Dorsolateral prefrontal cortex (tissue), 120 donors: ENCODE measurements at regions of chr16 and their contacts with region 1.

Region 1: GRCh38 chr16:67872786-67873537 is at the start of gene EDC4:
- DNase-seq: peak; percentile 59 to 88 (median 76)
- H3K4me3 ChIP-seq: peak within 1 kb of the TSS; percentile 67 to 100 (median 93)
- H3K27ac ChIP-seq: peak within 1 kb of the TSS in 58 of 59 donors; percentile 11 to 93 (median 81)
- H3K27me3 ChIP-seq: no peaks in the 10 kb centered on the region
- CTCF ChIP-seq: peak in 33 of 56 donors; percentile 9 to 56 (median 26)
- total RNA-seq, gene EDC4: 46.0 to 96.6 (median 69.2) TPM

Region 2: GRCh38 chr16:67659648-67660563 is 213.1 kb before region 1 on chr16 and contains the start of gene ACD:
- intact Hi-C with region 1: no loop called
- DNase-seq: peak; percentile 80 to 96 (median 92)
- H3K4me3 ChIP-seq: peak within 1 kb of the TSS; percentile 57 to 100 (median 92)
- H3K27ac ChIP-seq: peak within 1 kb of the TSS; percentile 82 to 99 (median 97)
- H3K27me3 ChIP-seq: no peaks in the 10 kb centered on the region
- CTCF ChIP-seq: peak in 21 of 56 donors; percentile 6 to 41 (median 14)
- total RNA-seq, gene ACD: 19.1 to 42.5 (median 29.0) TPM

Region 3: DNA sequence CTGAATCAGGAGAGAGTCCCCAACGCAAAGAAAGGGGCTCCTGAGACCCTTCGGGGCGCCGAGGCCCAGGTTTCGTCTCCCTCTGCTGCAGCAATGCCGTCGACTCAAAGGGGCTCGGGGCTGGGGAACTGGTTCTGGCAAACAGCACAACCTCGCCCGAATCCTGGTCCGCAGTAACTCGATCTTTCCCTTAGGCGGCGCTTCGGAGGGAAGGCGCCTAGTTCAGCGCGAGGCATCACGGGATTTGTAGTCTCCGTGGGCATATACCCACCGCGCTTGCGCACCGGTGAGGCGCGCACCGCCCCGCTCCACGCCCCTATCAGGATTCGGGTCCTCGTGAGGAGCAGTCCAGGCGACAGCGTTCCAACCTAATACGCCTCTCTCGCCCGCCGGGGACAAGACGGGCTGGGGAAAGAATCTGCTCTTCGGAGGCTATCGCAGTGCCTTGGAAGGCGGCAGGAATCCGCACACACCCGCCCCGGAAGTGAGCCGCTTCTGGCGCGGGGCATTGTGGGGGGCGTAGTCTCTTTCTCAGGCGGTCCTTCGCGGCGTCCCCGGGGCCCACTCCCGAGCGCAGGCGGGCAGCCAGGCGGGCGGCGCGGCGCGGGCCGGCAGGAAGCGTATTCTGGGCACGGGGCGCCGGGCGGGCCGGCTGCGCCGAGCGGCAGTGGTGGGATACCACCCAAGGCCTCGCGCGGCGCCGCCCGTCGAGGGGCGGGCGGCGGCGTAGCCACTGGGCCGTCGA is 31.0 kb before region 1 on chr16 and contains the start of gene THAP11:
- intact Hi-C with region 1: loop called in 1 of 2 experiments (anchors 2 kb)
- DNase-seq: peak; percentile 88 to 95 (median 91)
- H3K4me3 ChIP-seq: peak within 1 kb of the TSS; percentile 73 to 100 (median 94)
- H3K27ac ChIP-seq: peak within 1 kb of the TSS; percentile 97 to 100 (median 100)
- H3K27me3 ChIP-seq: no peaks in the 10 kb centered on the region
- CTCF ChIP-seq: peak; percentile 77 to 98 (median 94)
- total RNA-seq, gene THAP11: 17.7 to 30.0 (median 24.0) TPM